Naive thymus-derived CD4-positive, alpha-beta T cell (primary cell): ENCODE measurements at regions of chr7 and their contacts with region 1.

Region 1: GRCh38 chr7:129889133-129889844 is 63.5 kb downstream of the UBE2H start:
- DNase-seq: no peak
- ATAC-seq: no peak
- H3K4me3 ChIP-seq: no peak overlapping the region
- H3K4me3 Mint-ChIP-seq: no peak overlapping the region
- H3K27ac ChIP-seq: no peak overlapping the region
- H3K27ac Mint-ChIP-seq: peak overlapping the region in 4 of 9 donors; percentile 8 to 59 (median 24)
- H3K4me1 ChIP-seq: no peaks in the 10 kb centered on the region
- H3K4me1 Mint-ChIP-seq: peaks cover 0 to 43% (median 24%) of the 10 kb centered on the region in 7 donors
- H3K27me3 ChIP-seq: no peaks in the 10 kb centered on the region
- H3K27me3 Mint-ChIP-seq: no peaks in the 10 kb centered on the region

Region 2: GRCh38 chr7:129853661-129854300 is 35.5 kb before region 1 on chr7:
- CTCF ChIA-PET with region 1: no interaction called
- POLR2A ChIA-PET with region 1: interaction called, 3 read pairs
- intact Hi-C with region 1: loop called in 1 of 2 experiments (anchors 5 kb)
- DNase-seq: no peak
- ATAC-seq: no peak
- H3K4me3 ChIP-seq: no peak overlapping the region
- H3K4me3 Mint-ChIP-seq: no peak overlapping the region
- H3K27ac ChIP-seq: no peak overlapping the region
- H3K27ac Mint-ChIP-seq: peak overlapping the region in 2 of 9 donors; percentile 19 to 22
- H3K4me1 ChIP-seq: peaks cover 0 to 3% of the 10 kb centered on the region in 2 donors
- H3K4me1 Mint-ChIP-seq: peaks cover 9 to 82% (median 70%) of the 10 kb centered on the region in 7 donors
- H3K27me3 ChIP-seq: no peaks in the 10 kb centered on the region
- H3K27me3 Mint-ChIP-seq: no peaks in the 10 kb centered on the region

Region 3: GRCh38 chr7:129933627-129934026 is 44.3 kb after region 1 on chr7:
- CTCF ChIA-PET with region 1: no interaction called
- POLR2A ChIA-PET with region 1: interaction called, 3 read pairs
- intact Hi-C with region 1: loop called in 1 of 2 experiments (anchors 5 kb)
- DNase-seq: no peak
- ATAC-seq: no peak
- H3K4me3 ChIP-seq: no peak overlapping the region
- H3K4me3 Mint-ChIP-seq: peak overlapping the region in 1 of 10 donors; percentile 5
- H3K27ac ChIP-seq: no peak overlapping the region
- H3K27ac Mint-ChIP-seq: peak overlapping the region in 1 of 9 donors; percentile 22
- H3K4me1 ChIP-seq: no peaks in the 10 kb centered on the region
- H3K4me1 Mint-ChIP-seq: peaks cover 0 to 34% (median 18%) of the 10 kb centered on the region in 7 donors
- H3K27me3 ChIP-seq: no peaks in the 10 kb centered on the region
- H3K27me3 Mint-ChIP-seq: no peaks in the 10 kb centered on the region

Region 4: GRCh38 chr7:130314305-130314704 is 425.0 kb after region 1 on chr7:
- CTCF ChIA-PET with region 1: no interaction called
- POLR2A ChIA-PET with region 1: no interaction called
- intact Hi-C with region 1: no loop called
- DNase-seq: no peak
- ATAC-seq: no peak
- H3K4me3 ChIP-seq: no peak overlapping the region
- H3K4me3 Mint-ChIP-seq: no peak overlapping the region
- H3K27ac ChIP-seq: no peak overlapping the region
- H3K27ac Mint-ChIP-seq: no peak overlapping the region
- H3K4me1 ChIP-seq: no peaks in the 10 kb centered on the region
- H3K4me1 Mint-ChIP-seq: peaks cover 0 to 2% (median 0%) of the 10 kb centered on the region in 7 donors
- H3K27me3 ChIP-seq: no peaks in the 10 kb centered on the region
- H3K27me3 Mint-ChIP-seq: no peaks in the 10 kb centered on the region

Region 5: GRCh38 chr7:130521258-130521951 is 632.1 kb after region 1 on chr7:
- CTCF ChIA-PET with region 1: no interaction called
- POLR2A ChIA-PET with region 1: no interaction called
- intact Hi-C with region 1: no loop called
- DNase-seq: no peak
- ATAC-seq: no peak
- H3K4me3 ChIP-seq: no peak overlapping the region
- H3K4me3 Mint-ChIP-seq: no peak overlapping the region
- H3K27ac ChIP-seq: no peak overlapping the region
- H3K27ac Mint-ChIP-seq: no peak overlapping the region
- H3K4me1 ChIP-seq: no peaks in the 10 kb centered on the region
- H3K4me1 Mint-ChIP-seq: no peaks in the 10 kb centered on the region
- H3K27me3 ChIP-seq: no peaks in the 10 kb centered on the region
- H3K27me3 Mint-ChIP-seq: no peaks in the 10 kb centered on the region